ENCODE measurements at regions of chr9 and their contacts with region 1.

Region 1: DNA sequence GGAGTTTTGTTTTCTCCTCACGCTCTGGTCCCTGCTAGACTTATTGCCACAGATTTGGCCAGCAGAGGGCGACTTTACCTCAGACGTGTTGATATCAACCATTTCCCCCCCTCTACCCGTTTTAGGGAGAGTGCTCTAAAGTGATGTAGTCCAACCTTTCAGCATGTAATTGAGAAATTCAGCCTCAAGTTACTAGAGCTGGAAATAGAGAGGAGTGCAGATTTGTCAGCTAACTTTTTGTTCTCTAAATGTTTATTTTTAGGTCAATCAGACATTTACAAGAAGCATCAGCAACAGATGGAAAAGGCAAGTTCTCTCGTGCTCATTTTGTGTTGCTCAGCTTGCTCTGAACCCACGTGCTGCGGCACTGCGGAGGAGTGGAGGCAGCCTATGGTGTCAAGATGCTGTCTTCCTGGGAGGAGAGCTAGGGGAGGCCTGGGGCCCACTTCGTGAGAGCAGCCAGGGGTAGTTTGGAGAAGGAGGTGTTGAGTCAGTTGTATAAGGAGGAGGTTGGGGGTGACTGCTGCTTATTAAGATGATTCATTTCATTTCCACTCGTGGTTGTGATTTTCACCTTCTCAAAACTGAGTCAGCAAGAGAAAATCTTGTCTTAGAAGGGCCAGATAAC is 53.6 kb downstream of the GPR107 start:
- DNase-seq: peak; percentile 94
- H3K4me3 ChIP-seq: no peak overlapping the region
- H3K27ac ChIP-seq: peak overlapping the region; percentile 69 to 90 (median 79)
- H3K4me1 ChIP-seq: peaks cover 0 to 41% (median 32%) of the 10 kb centered on the region in 4 donors
- H3K27me3 ChIP-seq: no peaks in the 10 kb centered on the region
- CTCF ChIP-seq: peak; percentile 80 to 87 (median 86)
- EP300 ChIP-seq: no peak
- POLR2A ChIP-seq: no peak

Region 2: GRCh38 chr9:130073373-130073772 is 34.0 kb before region 1 on chr9:
- intact Hi-C with region 1: no loop called
- DNase-seq: no peak
- H3K4me3 ChIP-seq: no peak overlapping the region
- H3K27ac ChIP-seq: no peak overlapping the region
- H3K4me1 ChIP-seq: peaks cover 0 to 31% (median 15%) of the 10 kb centered on the region in 4 donors
- H3K27me3 ChIP-seq: no peaks in the 10 kb centered on the region
- CTCF ChIP-seq: no peak
- EP300 ChIP-seq: no peak
- POLR2A ChIP-seq: no peak

Region 3: GRCh38 chr9:130193531-130194377 is 86.4 kb after region 1 on chr9:
- intact Hi-C with region 1: loop called (anchors 5 kb)
- DNase-seq: no peak
- H3K4me3 ChIP-seq: peak overlapping the region in 2 of 4 donors; percentile 15 to 20
- H3K27ac ChIP-seq: peak overlapping the region; percentile 94 to 99 (median 96)
- H3K4me1 ChIP-seq: peaks cover 2 to 99% (median 98%) of the 10 kb centered on the region in 4 donors
- H3K27me3 ChIP-seq: no peaks in the 10 kb centered on the region
- CTCF ChIP-seq: no peak
- EP300 ChIP-seq: no peak
- POLR2A ChIP-seq: no peak

Region 4: GRCh38 chr9:130235897-130236668 is 128.7 kb after region 1 on chr9:
- intact Hi-C with region 1: loop called (anchors 1 kb)
- DNase-seq: peak; percentile 86
- H3K4me3 ChIP-seq: no peak overlapping the region
- H3K27ac ChIP-seq: peak overlapping the region; percentile 75 to 92 (median 82)
- H3K4me1 ChIP-seq: peaks cover 0 to 54% (median 45%) of the 10 kb centered on the region in 4 donors
- H3K27me3 ChIP-seq: no peaks in the 10 kb centered on the region
- CTCF ChIP-seq: peak; percentile 97 to 100 (median 100)
- EP300 ChIP-seq: peak in 2 of 4 donors; percentile 47
- POLR2A ChIP-seq: no peak

Region 5: DNA sequence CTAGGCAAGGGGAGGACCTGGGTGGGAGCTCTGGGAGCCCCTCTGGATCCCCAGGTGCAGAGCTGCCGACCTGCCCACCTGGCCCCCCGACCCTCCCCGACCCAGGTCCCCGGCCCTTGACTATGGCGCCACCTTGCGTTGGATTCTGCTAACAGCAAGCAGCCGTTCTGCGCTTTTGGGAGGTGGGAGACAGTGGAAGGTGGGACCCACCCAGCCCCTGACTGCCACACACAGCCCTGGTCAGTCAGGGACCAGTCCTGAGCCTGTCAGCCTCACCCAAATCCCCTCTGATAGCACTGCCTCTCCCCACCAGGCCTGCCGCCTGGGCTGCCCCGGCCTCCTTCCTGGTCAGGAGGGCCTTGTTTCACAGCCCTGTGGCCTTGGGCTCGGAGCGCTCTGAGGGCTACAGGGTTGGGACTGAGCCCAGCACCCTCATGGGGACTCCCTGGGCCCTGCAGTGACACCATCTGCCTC is 236.1 kb after region 1 on chr9:
- intact Hi-C with region 1: loop called (anchors 1 kb)
- DNase-seq: peak; percentile 75
- H3K4me3 ChIP-seq: no peak overlapping the region
- H3K27ac ChIP-seq: peak overlapping the region in 3 of 4 donors; percentile 26 to 70 (median 43)
- H3K4me1 ChIP-seq: peaks cover 0 to 23% (median 12%) of the 10 kb centered on the region in 4 donors
- H3K27me3 ChIP-seq: no peaks in the 10 kb centered on the region
- CTCF ChIP-seq: peak; percentile 75 to 89 (median 86)
- EP300 ChIP-seq: no peak
- POLR2A ChIP-seq: no peak